ENCODE measurements at regions of chr2 and their contacts with region 1.

Region 1: DNA sequence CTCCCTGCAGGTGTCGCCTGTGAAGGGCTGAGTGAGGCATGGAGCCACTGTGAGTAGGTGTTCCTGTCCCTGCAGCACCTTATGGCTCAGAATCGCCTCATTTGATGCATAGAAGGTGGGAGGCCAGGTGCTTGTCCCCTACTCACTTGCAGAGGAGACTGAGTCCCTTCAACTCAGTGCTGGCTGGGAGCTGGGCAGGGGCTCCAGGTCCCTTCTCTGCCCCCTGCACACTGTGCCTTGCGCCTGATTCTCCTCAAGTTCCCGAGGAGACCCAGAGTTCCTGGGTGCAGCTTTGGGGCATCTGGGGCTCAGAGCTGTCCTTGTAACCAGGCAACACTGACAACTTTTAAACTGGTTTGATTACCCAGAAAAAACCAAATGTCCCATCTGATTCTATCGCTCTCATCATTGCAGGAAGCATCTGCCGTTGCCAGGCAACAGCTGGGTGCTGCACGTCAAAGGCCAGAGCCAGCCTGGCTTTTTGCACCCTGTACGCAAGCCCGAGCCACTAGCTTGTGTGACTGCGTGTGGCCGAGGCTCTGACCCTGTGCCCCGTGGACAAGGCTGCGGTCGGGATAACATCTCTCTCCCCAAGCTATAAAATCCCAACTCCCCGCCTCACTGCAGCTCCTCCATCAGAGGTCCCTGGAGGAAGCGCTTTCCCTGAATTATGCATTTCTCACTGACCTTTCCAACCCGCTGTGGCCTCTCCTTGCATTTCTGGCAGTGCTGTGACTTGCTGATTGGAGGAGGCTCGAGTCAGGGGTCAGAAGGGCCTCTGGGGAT is 130.8 kb upstream of the HDAC4 start:
- DNase-seq: no peak
- H3K4me3 ChIP-seq: no peak overlapping the region
- H3K27ac ChIP-seq: no peak overlapping the region
- H3K27me3 ChIP-seq: no peaks in the 10 kb centered on the region
- CTCF ChIP-seq: no peak

Region 2: DNA sequence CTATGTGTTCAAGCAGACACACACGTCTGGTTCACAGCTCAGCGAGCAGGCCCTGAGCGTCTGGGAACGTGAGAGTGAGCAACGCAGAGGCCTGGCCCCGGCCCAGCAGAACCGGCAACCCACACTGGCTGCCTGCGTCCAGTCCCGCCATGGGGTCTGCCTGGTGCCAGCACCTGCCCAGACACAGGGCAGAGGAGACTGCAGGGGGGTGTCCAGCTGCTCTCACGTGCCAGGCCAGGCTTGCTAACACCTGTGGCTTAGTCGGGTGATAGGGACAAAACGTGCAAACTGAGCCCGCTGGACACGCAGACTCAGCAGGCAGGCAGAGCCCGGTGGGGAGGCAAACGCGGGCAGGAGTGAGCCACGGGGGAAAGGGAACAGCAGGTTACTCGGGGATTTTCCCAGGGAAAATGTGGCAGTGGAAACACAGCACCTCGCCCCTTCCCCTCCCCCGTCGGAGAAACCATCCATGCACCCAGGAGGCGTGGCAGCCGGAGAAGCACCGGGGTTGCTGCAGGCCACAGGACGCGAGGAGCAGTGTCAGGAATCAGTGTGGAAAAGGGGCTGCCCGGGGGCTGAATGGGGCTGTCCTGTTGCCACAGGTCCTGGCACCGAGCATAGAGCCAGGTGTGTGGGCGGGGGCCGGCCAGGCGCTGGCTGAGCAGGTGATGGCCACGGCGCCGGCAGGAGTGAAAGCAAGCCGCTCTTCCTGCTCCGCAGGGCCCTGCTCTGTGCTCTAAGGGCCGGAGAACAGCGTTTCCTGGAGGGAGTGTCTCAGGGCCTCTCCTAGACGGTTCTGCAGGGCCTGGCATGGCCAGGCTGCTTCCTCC is 285.6 kb before region 1 on chr2:
- CTCF ChIA-PET with region 1: no interaction called
- POLR2A ChIA-PET with region 1: no interaction called
- DNase-seq: no peak
- H3K4me3 ChIP-seq: no peak overlapping the region
- H3K27ac ChIP-seq: no peak overlapping the region
- H3K27me3 ChIP-seq: no peaks in the 10 kb centered on the region
- CTCF ChIP-seq: no peak

Region 3: GRCh38 chr2:239465017-239466001 is 66.3 kb before region 1 on chr2:
- CTCF ChIA-PET with region 1: no interaction called
- POLR2A ChIA-PET with region 1: no interaction called
- DNase-seq: no peak
- H3K4me3 ChIP-seq: no peak overlapping the region
- H3K27ac ChIP-seq: no peak overlapping the region
- H3K27me3 ChIP-seq: no peaks in the 10 kb centered on the region
- CTCF ChIP-seq: no peak

Region 4: DNA sequence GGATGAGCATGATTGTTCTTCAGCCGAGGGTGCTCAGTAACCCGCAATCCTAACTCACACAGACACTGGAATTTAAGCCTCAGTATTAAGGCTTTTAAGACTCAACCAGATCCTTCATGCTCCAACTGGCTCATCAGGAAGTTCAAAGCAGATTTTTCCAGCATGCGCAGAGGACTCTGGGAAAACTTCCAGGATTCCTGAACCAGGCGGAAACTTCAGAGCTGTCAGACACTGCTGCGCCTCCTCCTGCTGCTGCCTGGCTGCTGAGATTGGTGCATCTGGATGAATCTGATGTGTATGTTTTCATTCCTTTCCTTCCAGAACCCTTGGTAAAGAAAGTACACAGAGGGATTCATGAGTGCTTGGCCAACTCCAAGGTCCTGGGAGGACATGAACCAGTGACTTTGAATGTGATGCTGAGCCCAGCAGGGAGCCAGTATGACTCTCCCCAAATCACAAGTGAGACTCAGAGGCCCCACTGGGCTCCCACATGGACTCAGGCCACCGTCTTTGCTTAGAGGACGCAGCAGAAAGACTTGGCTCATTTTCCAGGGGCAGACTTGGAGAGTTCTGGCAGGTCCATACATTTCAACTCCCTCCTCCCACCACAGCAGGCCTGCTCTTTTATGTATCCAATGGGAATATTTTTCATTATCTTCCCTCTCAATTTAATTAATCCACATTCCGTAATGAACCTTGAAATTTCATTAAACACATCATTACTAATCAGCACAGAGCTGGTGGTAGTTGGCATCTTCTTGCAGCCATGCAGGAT is 12.7 kb after region 1 on chr2:
- CTCF ChIA-PET with region 1: no interaction called
- POLR2A ChIA-PET with region 1: no interaction called
- DNase-seq: no peak
- H3K4me3 ChIP-seq: no peak overlapping the region
- H3K27ac ChIP-seq: no peak overlapping the region
- H3K27me3 ChIP-seq: no peaks in the 10 kb centered on the region
- CTCF ChIP-seq: no peak

Region 5: DNA sequence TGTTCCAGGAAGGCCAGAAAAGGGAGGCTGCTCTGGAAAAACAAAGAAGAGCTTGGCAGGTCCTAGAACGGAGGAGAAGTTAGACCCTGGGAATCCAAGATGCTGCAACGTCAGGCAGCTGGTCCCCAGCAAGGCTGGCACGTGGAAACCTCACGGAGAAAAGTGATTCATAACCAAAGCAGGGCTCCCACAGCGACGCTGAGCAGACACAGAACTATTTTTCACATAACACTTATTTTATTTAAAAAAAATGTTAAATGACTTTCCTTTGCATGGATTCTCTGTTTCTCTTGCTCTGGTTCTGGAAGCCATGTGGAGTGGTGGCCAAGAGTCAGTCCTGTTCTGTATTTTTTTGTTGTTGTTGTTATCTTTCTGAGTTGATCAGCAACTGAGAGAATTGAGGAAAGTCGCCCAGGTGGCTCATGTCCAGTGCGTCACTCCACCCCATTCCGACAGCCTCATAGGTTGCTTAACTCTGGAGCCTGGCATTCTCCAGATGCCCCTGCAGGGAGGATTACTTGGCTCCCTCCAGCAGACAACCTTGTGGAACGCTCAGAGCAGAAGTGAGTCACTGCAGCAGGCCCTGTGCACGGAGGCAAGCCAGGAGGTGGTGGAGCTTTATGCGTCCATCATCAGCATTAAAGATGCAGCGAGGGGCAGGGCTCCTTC is 99.1 kb after region 1 on chr2:
- CTCF ChIA-PET with region 1: no interaction called
- POLR2A ChIA-PET with region 1: interaction called, 14 read pairs
- DNase-seq: peak; percentile 3
- H3K4me3 ChIP-seq: no peak overlapping the region
- H3K27ac ChIP-seq: no peak overlapping the region
- H3K27me3 ChIP-seq: no peaks in the 10 kb centered on the region
- CTCF ChIP-seq: no peak

Region 6: GRCh38 chr2:239728211-239728600 is 196.6 kb after region 1 on chr2:
- CTCF ChIA-PET with region 1: no interaction called
- POLR2A ChIA-PET with region 1: no interaction called
- DNase-seq: no peak
- H3K4me3 ChIP-seq: no peak overlapping the region
- H3K27ac ChIP-seq: no peak overlapping the region
- H3K27me3 ChIP-seq: no peaks in the 10 kb centered on the region
- CTCF ChIP-seq: no peak

Measured in AG04450 (cell line).